ENCODE measurements at regions of chr17 and their contacts with region 1.

Region 1: DNA sequence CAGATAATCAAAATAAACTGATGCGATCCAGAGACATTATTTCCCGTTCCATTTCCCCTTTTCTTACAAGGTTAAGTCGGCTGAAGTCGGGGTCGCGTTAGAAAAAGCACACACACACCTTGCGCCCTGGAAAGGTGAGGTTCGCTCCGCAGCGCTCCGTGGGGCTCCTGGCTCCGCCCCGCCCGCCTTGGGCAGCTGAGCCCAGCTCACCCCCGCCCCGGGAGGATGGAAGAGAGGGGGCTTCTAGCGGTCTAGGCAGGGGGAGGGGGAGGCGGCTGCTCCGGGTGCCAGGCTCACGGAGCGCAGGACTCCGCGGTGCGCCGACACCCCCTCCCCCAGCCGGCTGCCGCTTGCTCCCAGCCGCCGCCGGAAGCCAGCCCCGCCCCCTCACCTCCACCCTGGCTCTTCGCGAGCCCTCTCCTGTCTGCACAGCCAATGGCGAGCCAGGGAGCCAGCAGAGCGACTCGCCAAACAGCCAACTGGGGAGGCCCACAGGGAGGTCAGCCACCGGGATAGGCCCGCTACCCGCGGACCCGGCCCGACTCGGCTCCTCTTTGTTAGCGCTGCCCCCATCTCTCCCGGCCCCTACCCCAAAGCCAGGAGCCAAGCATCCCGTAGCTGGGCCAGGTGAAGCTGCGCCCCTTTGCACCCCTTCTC is 30.4 kb downstream of the FAM222B start:
- DNase-seq: peak; percentile 98
- H3K4me3 Mint-ChIP-seq: peak overlapping the region; percentile 82
- H3K27ac Mint-ChIP-seq: peak overlapping the region; percentile 86
- H3K4me1 Mint-ChIP-seq: peaks cover 50% of the 10 kb centered on the region
- H3K27me3 Mint-ChIP-seq: no peaks in the 10 kb centered on the region

Region 2: GRCh38 chr17:28777178-28777577 is 35.0 kb before region 1 on chr17:
- CTCF ChIA-PET with region 1: no interaction called
- intact Hi-C with region 1: loop called (anchors 1 kb)
- DNase-seq: no peak
- H3K4me3 Mint-ChIP-seq: no peak overlapping the region
- H3K27ac Mint-ChIP-seq: peak overlapping the region; percentile 6
- H3K4me1 Mint-ChIP-seq: peaks cover 31% of the 10 kb centered on the region
- H3K27me3 Mint-ChIP-seq: no peaks in the 10 kb centered on the region

Region 3: GRCh38 chr17:28854457-28855350 is 42.5 kb after region 1 on chr17 and contains the start of gene ERAL1:
- CTCF ChIA-PET with region 1: interaction called, 7 read pairs
- intact Hi-C with region 1: loop called (anchors 2 kb)
- DNase-seq: peak; percentile 93
- H3K4me3 Mint-ChIP-seq: peak within 1 kb of the TSS; percentile 79
- H3K27ac Mint-ChIP-seq: peak within 1 kb of the TSS; percentile 87
- H3K4me1 Mint-ChIP-seq: peaks cover 25% of the 10 kb centered on the region
- H3K27me3 Mint-ChIP-seq: no peaks in the 10 kb centered on the region
- total RNA-seq, gene ERAL1: 51.2 to 60.4 TPM

Region 4: GRCh38 chr17:28896884-28897768 is 84.9 kb after region 1 on chr17 and contains the start of gene FLOT2:
- CTCF ChIA-PET with region 1: interaction called, 5 read pairs
- intact Hi-C with region 1: loop called (anchors 2 kb)
- DNase-seq: peak; percentile 88
- H3K4me3 Mint-ChIP-seq: peak within 1 kb of the TSS; percentile 94
- H3K27ac Mint-ChIP-seq: peak within 1 kb of the TSS; percentile 93
- H3K4me1 Mint-ChIP-seq: peaks cover 72% of the 10 kb centered on the region
- H3K27me3 Mint-ChIP-seq: no peaks in the 10 kb centered on the region
- total RNA-seq, gene FLOT2: 66.0 to 71.5 TPM

Region 5: DNA sequence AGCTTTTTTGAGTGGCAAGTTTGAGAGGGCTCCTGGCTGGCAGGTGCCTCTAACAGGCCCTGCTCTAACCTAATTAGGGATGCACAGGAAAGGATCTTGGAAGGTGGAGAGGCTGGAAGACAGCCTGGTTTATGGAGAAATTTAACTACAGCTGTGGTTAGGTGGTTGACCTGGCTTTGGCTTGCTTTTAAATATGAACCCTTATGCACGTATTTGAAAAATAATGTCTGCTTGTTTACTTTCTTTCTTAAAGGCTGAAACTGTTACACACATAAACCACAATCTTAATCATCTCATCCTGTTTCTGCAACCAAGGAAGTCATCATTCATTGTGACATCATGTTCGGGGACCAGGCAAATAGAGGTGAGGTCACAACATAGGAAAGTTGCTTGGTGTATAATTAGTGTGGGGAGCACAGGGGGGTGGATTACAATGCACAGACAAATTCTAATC is 113.7 kb after region 1 on chr17:
- CTCF ChIA-PET with region 1: no interaction called
- intact Hi-C with region 1: loop called (anchors 1 kb)
- DNase-seq: peak; percentile 58
- H3K4me3 Mint-ChIP-seq: no peak overlapping the region
- H3K27ac Mint-ChIP-seq: peak overlapping the region; percentile 76
- H3K4me1 Mint-ChIP-seq: peaks cover 63% of the 10 kb centered on the region
- H3K27me3 Mint-ChIP-seq: no peaks in the 10 kb centered on the region

Measured in activated naive CD4-positive, alpha-beta T cell treated with anti-CD3 and anti-CD28 coated beads for 36 hours (primary cell).